Lower leg skin (tissue), 4 donors: ENCODE measurements at regions of chr14 and their contacts with region 1.

Region 1: GRCh38 chr14:103385152-103385993 is at the start of gene MARK3:
- DNase-seq: peak; percentile 97 to 99
- H3K4me3 ChIP-seq: peak within 1 kb of the TSS; percentile 96
- CTCF ChIP-seq: no peak
- POLR2A ChIP-seq: peak in 1 of 2 donors; percentile 61
- total RNA-seq, gene MARK3: 47.3 to 68.2 (median 58.8) TPM

Region 2: DNA sequence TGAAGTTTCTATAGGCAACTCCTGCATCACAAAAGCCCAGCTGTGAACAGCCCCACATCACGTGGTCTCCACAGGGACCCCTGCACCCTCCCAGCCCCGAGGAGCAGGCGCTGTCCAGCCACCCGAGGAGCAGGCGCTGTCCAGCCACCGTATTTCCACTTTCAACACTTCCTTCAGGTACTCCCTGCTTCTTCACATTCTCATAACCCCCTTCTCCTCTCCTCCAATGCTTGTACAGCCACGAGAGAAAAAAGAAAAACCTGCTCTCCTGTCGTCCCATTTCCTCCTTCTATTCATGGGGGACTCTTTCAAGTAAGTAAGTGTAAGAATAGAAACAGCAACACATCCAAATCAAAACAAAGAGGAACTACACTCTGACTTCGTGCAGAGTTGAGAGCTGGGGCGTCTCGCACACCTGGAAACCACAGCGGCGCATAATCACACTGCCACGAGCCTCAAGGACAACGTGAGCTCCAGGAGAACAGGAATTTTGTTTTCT is 340.0 kb before region 1 on chr14:
- intact Hi-C with region 1: no loop called
- DNase-seq: no peak
- H3K4me3 ChIP-seq: no peak overlapping the region
- CTCF ChIP-seq: no peak
- POLR2A ChIP-seq: no peak

Region 3: DNA sequence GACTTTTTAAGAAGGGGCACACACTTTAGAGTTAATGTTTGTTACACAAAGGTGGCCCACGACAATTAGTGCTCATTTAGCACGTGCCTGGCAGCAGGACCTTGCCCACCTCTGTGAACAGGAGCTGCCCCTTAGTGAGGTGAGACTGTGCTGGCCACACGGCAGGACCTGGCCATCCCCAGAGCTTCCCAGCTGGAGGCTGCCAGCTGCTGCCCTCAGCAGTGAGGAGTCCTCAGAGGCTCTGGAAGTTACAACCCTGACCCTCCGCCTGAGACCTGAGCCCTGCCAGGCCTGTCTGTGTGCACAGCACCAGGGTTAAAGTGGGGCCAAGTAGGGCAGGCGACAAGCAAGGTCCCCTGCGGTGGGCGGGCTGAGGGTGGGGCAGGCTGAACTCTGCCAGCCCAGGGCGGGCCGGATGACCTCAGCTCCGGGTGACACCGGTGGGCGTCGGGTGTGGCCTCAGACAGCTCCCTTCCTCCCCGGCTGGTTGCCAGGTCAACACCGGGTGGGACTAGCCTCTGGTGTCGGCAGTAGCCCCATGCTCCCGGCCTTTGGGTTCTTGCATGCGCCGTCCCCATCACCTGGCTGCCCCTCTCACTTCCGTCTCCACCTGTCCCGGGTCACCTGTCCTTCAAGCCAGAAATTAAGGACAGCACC is 310.5 kb before region 1 on chr14:
- intact Hi-C with region 1: no loop called
- DNase-seq: peak; percentile 62 to 95
- H3K4me3 ChIP-seq: no peak overlapping the region
- CTCF ChIP-seq: no peak
- POLR2A ChIP-seq: no peak

Region 4: GRCh38 chr14:103334644-103335622 is 50.4 kb before region 1 on chr14:
- intact Hi-C with region 1: loop called (anchors 5 kb)
- DNase-seq: peak; percentile 68 to 94
- H3K4me3 ChIP-seq: peak overlapping the region; percentile 97
- CTCF ChIP-seq: no peak
- POLR2A ChIP-seq: no peak